Dendritic cell treated with granulocyte-macrophage colony-stimulating factor and Interleukin-4, amounts not matched to agents 40 ng/mL and 50 ng/mL, for 4 days (primary cell): ENCODE measurements at regions of chr11 and their contacts with region 1.

Region 1: GRCh38 chr11:128157423-128158298 is 429.7 kb downstream of the ETS1 start:
- H3K4me3 Mint-ChIP-seq: no peak overlapping the region
- H3K27ac Mint-ChIP-seq: no peak overlapping the region
- H3K4me1 Mint-ChIP-seq: peaks cover 5% of the 10 kb centered on the region
- H3K27me3 Mint-ChIP-seq: no peaks in the 10 kb centered on the region

Region 2: DNA sequence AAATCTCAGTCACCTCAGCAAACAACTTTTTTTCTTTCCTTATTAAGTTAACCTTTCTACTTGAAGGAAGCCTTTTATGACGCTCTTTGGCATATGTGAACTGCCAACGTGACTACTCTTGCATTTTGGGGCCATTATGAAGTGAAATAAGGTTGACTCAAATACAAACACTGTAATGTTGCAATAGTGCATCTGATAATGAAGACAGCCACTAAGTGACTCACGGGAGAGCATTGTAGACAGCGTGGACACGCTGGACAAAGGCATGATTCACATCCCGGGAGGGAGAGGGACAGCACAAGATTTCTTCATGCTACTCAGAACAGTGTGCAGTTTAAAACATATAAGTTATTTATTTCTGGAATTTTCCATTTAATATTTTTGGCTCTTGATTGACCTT is 131.1 kb before region 1 on chr11:
- intact Hi-C with region 1: loop called (anchors 1 kb)
- H3K4me3 Mint-ChIP-seq: no peak overlapping the region
- H3K27ac Mint-ChIP-seq: no peak overlapping the region
- H3K4me1 Mint-ChIP-seq: no peaks in the 10 kb centered on the region
- H3K27me3 Mint-ChIP-seq: peaks cover 2% of the 10 kb centered on the region

Region 3: DNA sequence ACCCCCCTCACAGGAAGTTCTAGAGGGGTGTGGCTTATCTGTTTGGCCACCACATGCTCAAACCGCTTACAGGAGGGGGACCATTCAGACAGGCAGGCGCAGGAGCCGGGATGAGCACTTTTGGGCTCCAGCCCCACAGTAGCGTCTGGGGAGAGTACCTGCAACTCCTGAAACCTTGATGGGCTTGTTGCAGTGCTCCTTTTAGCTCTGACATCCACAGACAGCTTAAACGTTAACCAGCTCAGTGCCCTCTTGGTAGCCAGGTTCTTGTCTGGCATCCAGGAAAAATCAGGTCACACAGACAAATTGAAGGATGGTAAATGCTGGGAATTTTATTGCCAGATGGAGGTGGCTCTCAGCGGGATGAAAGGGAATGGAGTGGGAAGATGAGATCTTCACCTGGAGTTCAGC is 103.4 kb after region 1 on chr11:
- intact Hi-C with region 1: no loop called
- H3K4me3 Mint-ChIP-seq: no peak overlapping the region
- H3K27ac Mint-ChIP-seq: no peak overlapping the region
- H3K4me1 Mint-ChIP-seq: peaks cover 15% of the 10 kb centered on the region
- H3K27me3 Mint-ChIP-seq: no peaks in the 10 kb centered on the region

Region 4: GRCh38 chr11:128365044-128365443 is 207.4 kb after region 1 on chr11:
- intact Hi-C with region 1: no loop called
- H3K4me3 Mint-ChIP-seq: no peak overlapping the region
- H3K27ac Mint-ChIP-seq: no peak overlapping the region
- H3K4me1 Mint-ChIP-seq: peaks cover 9% of the 10 kb centered on the region
- H3K27me3 Mint-ChIP-seq: peaks cover 13% of the 10 kb centered on the region

Region 5: DNA sequence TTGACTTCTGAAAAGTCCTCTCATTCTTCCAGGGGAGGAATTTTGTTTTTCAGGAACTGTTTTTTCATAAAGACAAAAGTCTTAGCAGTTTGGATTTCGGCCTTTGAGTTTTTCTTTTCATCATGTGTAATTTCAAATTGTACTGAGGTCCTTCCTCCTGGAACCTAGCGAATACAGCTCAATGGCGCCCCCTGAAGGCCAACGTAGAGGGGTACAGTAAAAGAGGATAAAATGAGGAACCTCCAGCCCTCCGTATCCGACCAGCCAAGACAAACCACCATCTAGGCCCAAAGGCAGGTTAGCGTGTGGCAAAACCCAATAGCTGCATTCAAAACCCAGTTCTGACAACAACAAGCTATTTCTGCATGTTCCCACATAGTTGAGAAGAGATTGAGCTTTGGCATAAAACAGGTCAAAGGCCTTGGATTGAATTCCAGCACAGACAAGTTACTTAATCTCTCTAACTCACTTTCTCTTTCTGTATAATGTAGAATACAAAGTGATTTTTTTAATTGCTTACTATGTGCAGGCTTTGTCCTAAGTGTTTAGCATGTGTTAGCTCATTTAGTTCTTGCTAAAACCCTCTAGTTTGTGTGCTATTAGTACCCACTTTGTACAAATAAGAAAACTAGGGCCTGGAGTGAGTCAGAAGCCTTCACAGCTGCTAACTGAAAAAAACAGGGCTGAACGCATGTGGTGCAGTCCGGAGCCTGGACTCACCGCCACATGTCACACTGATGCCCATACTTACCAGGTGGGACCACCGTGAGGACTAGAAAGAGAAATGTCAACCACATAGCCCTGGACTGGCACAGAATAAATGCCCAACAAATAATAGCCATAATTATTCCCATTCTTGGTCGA is 472.9 kb after region 1 on chr11:
- intact Hi-C with region 1: loop called (anchors 5 kb)
- H3K4me3 Mint-ChIP-seq: no peak overlapping the region
- H3K27ac Mint-ChIP-seq: no peak overlapping the region
- H3K4me1 Mint-ChIP-seq: peaks cover 1% of the 10 kb centered on the region
- H3K27me3 Mint-ChIP-seq: peaks cover 3% of the 10 kb centered on the region

Region 6: GRCh38 chr11:128859563-128860441 is 702.1 kb after region 1 on chr11:
- intact Hi-C with region 1: loop called (anchors 5 kb)
- H3K4me3 Mint-ChIP-seq: no peak overlapping the region
- H3K27ac Mint-ChIP-seq: no peak overlapping the region
- H3K4me1 Mint-ChIP-seq: peaks cover 7% of the 10 kb centered on the region
- H3K27me3 Mint-ChIP-seq: peaks cover 17% of the 10 kb centered on the region